ENCODE measurements at regions of chr1 and their contacts with region 1.

Region 1: GRCh38 chr1:160451119-160451858 is 50.9 kb downstream of the VANGL2 start:
- DNase-seq: peak; percentile 44
- ATAC-seq: peak; percentile 43
- H3K4me3 ChIP-seq: 0 out of 2 replicates have a peak overlapping the region, but pooled peaks have one; percentile 2
- H3K27ac ChIP-seq: peak overlapping the region; percentile 82
- H3K4me1 ChIP-seq: peaks cover 47% of the 10 kb centered on the region
- H3K27me3 ChIP-seq: no peaks in the 10 kb centered on the region
- CTCF ChIP-seq: no peak
- EP300 ChIP-seq: no peak
- POLR2A ChIP-seq: no peak
- RAD21 ChIP-seq: no peak

Region 2: DNA sequence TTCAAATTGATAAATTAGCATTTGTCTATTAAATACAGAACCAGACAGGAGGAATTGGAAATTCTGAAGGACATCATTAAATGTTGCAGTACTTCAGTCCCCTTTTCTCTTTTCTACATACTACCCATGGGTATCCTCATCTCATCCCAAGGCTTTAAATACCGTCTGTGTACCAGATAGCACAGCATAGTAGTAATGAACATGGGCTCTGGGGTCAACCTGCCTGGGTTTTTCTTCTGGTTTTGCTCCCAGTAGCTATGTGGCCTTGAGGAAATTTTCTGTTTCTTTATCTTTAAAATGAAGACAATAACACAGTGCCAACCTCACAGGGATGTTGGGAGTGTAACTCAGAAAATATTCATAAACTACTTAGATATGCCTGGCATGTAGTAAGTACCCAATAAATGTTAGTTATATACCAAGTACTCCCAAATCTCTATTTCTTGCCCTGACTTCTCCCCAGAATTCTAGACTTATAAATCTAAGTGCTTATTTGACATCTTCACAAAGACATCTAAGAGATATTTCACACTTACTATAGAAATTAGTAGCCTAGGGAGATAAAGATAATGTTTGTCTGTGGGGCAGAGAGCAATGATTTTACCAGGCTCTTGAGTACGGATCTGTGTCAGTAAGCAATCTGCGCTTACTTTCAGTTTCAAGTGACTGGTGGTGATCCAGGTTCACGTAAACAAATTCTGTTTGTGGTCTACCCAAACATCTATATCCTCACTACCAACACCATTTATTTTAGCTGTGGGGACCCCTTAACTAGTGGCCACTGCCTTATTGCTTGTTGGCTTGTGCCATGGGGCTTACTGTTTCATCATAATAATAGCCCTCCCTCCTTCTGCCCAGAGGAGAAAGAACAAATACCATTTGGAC is 13.6 kb before region 1 on chr1:
- CTCF ChIA-PET with region 1: interaction called, 12 read pairs
- POLR2A ChIA-PET with region 1: interaction called, 14 read pairs
- RAD21 ChIA-PET with region 1: interaction called, 33 read pairs
- SMC1A ChIA-PET with region 1: interaction called, 68 read pairs
- in situ Hi-C with region 1: no loop called
- intact Hi-C with region 1: loop called (anchors 1 kb)
- DNase-seq: peak; percentile 62
- ATAC-seq: peak; percentile 95
- H3K4me3 ChIP-seq: peak overlapping the region; percentile 11; the same call in 1 of the 2 replicates
- H3K27ac ChIP-seq: peak overlapping the region; percentile 86
- H3K4me1 ChIP-seq: peaks cover 29% of the 10 kb centered on the region
- H3K27me3 ChIP-seq: no peaks in the 10 kb centered on the region
- CTCF ChIP-seq: no peak
- EP300 ChIP-seq: 0 out of 4 replicates have a peak, but pooled peaks of 1 of the 2 experiments have one; percentile 34
- POLR2A ChIP-seq: no peak
- RAD21 ChIP-seq: no peak

Region 3: GRCh38 chr1:160466961-160467360 is 15.7 kb after region 1 on chr1:
- CTCF ChIA-PET with region 1: interaction called, 7 read pairs
- POLR2A ChIA-PET with region 1: interaction called, 8 read pairs
- RAD21 ChIA-PET with region 1: interaction called, 7 read pairs
- SMC1A ChIA-PET with region 1: interaction called, 22 read pairs
- in situ Hi-C with region 1: no loop called
- intact Hi-C with region 1: no loop called
- DNase-seq: no peak
- ATAC-seq: peak; percentile 73
- H3K4me3 ChIP-seq: no peak overlapping the region
- H3K27ac ChIP-seq: no peak overlapping the region; the same call in 1 of the 2 replicates
- H3K4me1 ChIP-seq: peaks cover 41% of the 10 kb centered on the region
- H3K27me3 ChIP-seq: no peaks in the 10 kb centered on the region
- CTCF ChIP-seq: no peak
- EP300 ChIP-seq: no peak
- POLR2A ChIP-seq: no peak
- RAD21 ChIP-seq: no peak

Region 4: GRCh38 chr1:160539990-160540858 is 88.9 kb after region 1 on chr1:
- CTCF ChIA-PET with region 1: interaction called, 8 read pairs
- POLR2A ChIA-PET with region 1: interaction called, 3 read pairs
- RAD21 ChIA-PET with region 1: interaction called, 12 read pairs
- SMC1A ChIA-PET with region 1: interaction called, 19 read pairs
- in situ Hi-C with region 1: no loop called
- intact Hi-C with region 1: loop called (anchors 5 kb)
- DNase-seq: peak; percentile 95
- ATAC-seq: peak; percentile 95
- H3K4me3 ChIP-seq: peak overlapping the region; percentile 38; the same call in 1 of the 2 replicates
- H3K27ac ChIP-seq: peak overlapping the region; percentile 92
- H3K4me1 ChIP-seq: peaks cover 23% of the 10 kb centered on the region
- H3K27me3 ChIP-seq: no peaks in the 10 kb centered on the region
- CTCF ChIP-seq: no peak
- EP300 ChIP-seq: peak; percentile 53 to 73; a peak in 3 of 4 replicates
- POLR2A ChIP-seq: peak; percentile 66
- RAD21 ChIP-seq: 0 out of 2 replicates have a peak, but pooled peaks have one; percentile 11

Region 5: DNA sequence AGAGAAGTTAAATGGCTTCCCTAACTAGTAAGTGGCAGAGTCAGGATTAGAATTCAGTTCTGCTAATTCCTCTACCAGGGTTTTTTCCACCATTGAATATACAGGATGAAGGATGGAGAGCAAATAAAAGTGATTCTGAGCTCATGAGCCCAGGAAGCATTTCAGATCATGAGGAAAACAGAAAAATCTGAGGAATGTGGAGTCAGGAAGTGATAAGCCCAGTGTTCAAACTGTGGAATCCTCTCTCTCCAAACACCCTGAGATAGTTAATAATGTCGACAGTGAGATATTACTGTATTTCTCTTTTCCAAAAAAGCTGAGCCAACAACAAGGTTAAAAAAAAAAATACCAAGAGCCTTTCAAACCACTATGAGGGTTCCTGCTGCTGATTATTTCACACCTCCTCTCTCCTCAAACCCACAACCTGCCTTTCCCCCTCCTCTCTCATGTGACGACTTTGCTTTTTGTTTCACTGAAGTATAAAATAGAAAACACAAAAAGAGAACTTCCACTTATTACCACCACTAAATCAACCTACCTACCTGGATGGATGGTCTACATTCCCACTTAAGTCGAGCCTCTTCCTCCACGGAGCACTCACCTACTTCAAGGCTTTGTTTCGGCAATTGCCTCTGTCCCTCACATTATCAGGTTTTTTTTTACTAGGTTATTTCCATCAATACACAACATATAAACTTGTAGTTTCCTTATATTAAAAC is 186.7 kb after region 1 on chr1:
- CTCF ChIA-PET with region 1: no interaction called
- POLR2A ChIA-PET with region 1: no interaction called
- RAD21 ChIA-PET with region 1: no interaction called
- SMC1A ChIA-PET with region 1: no interaction called
- in situ Hi-C with region 1: no loop called
- intact Hi-C with region 1: no loop called
- DNase-seq: no peak
- ATAC-seq: peak; percentile 29
- H3K4me3 ChIP-seq: peak overlapping the region; percentile 56
- H3K27ac ChIP-seq: peak overlapping the region; percentile 77
- H3K4me1 ChIP-seq: peaks cover 56% of the 10 kb centered on the region
- H3K27me3 ChIP-seq: no peaks in the 10 kb centered on the region
- CTCF ChIP-seq: no peak
- EP300 ChIP-seq: 0 out of 4 replicates have a peak, but pooled peaks have one; percentile 32 to 36
- POLR2A ChIP-seq: no peak
- RAD21 ChIP-seq: no peak